Lower leg skin (tissue), 4 donors: ENCODE measurements at regions of chr16 and their contacts with region 1.

Region 1: GRCh38 chr16:11715246-11715947 is 27.3 kb downstream of the TXNDC11 start:
- DNase-seq: no peak
- H3K4me3 ChIP-seq: no peak overlapping the region
- CTCF ChIP-seq: no peak
- POLR2A ChIP-seq: no peak

Region 2: GRCh38 chr16:10964039-10964890 is 751.1 kb before region 1 on chr16:
- intact Hi-C with region 1: loop called (anchors 10 kb)
- DNase-seq: peak; percentile 79 to 96
- H3K4me3 ChIP-seq: no peak overlapping the region
- CTCF ChIP-seq: peak in 1 of 3 donors; percentile 96
- POLR2A ChIP-seq: no peak

Region 3: DNA sequence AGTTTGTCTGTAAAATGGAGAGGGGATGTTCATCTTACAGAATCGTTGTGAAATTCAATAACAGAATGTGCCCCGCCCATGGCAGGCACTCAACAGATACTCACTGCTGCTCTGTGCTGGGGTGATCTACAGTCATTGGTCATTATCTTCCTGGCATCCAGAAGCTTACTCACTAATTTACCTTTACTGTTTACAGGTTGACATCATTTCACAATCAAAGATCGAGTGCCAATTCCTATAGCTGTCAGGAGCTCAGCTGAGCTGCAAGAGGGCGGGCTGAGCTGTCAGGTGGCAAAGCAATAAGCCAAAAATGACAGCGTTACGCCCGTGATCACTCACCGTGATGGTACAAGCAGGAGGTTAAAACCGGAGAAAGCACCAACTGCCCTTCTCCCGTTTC is 179.9 kb before region 1 on chr16:
- intact Hi-C with region 1: loop called (anchors 10 kb)
- DNase-seq: peak in 1 of 2 donors; percentile 60
- H3K4me3 ChIP-seq: no peak overlapping the region
- CTCF ChIP-seq: no peak
- POLR2A ChIP-seq: no peak